Activated T-helper 2 cell treated with anti-CD3 and anti-CD28 coated beads, Interferon-gamma antibody, Interleukin-2, Interleukin-4, amounts not matched to agents 10 μg/mL and 5 μg/mL and 100 μg/mL, durations not matched to agents 14 hours and 24 hours and 36 hours (primary cell): ENCODE measurements at regions of chr14 and their contacts with region 1.

Region 1: DNA sequence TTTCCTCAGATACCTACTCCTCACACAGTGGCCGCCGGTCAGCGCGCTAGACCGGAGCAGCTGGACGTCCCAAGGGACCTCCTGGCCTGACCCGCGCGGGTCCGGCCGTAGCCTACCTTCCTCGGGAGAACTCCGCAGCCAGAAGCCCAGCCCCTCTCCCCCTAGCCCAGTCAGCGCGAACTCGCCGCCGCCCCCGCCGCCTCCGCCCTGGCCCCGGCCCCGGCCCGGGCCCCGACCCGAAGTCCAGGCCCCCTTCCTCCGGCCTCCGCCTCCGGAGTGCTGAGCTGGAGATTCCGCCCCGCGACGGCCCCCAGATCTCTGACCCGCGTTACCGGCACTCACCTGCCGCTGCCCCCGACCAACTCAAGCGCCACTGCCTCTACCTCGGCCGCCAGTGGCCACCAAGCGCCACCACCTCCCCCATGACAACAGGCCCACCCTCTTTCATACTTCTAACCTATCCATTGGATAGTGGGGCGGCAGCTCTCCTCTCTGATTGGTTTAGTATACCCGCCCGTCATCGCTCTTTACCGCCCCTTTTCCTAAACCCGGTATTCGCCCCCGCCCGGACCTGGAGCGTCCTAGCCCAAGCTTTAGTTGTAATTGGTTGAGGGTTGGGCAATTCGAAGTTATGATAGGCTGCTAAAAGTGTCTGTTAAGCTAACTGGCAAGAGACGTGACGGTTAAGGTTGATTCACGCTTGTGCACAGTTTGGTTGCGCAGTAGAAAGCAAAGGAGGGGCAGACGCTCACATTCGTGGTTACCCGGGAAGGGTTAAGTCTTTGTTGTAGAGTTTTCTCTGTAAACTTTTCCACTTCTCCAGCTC is at the start of gene NUMB:
- DNase-seq: peak; percentile 97
- H3K4me3 Mint-ChIP-seq: peak within 1 kb of the TSS; percentile 91
- H3K27ac Mint-ChIP-seq: peak within 1 kb of the TSS; percentile 86
- H3K4me1 Mint-ChIP-seq: peaks cover 44% of the 10 kb centered on the region
- H3K27me3 Mint-ChIP-seq: no peaks in the 10 kb centered on the region
- total RNA-seq, gene NUMB: 52.4 and 66.1 TPM in 2 replicates

Region 2: GRCh38 chr14:73491256-73492042 is 33.1 kb after region 1 on chr14:
- intact Hi-C with region 1: loop called (anchors 2 kb)
- DNase-seq: peak; percentile 71
- H3K4me3 Mint-ChIP-seq: peak overlapping the region; percentile 84
- H3K27ac Mint-ChIP-seq: peak overlapping the region; percentile 76
- H3K4me1 Mint-ChIP-seq: peaks cover 29% of the 10 kb centered on the region
- H3K27me3 Mint-ChIP-seq: peaks cover 5% of the 10 kb centered on the region